ENCODE measurements at regions of chr15 and their contacts with region 1.

Region 1: DNA sequence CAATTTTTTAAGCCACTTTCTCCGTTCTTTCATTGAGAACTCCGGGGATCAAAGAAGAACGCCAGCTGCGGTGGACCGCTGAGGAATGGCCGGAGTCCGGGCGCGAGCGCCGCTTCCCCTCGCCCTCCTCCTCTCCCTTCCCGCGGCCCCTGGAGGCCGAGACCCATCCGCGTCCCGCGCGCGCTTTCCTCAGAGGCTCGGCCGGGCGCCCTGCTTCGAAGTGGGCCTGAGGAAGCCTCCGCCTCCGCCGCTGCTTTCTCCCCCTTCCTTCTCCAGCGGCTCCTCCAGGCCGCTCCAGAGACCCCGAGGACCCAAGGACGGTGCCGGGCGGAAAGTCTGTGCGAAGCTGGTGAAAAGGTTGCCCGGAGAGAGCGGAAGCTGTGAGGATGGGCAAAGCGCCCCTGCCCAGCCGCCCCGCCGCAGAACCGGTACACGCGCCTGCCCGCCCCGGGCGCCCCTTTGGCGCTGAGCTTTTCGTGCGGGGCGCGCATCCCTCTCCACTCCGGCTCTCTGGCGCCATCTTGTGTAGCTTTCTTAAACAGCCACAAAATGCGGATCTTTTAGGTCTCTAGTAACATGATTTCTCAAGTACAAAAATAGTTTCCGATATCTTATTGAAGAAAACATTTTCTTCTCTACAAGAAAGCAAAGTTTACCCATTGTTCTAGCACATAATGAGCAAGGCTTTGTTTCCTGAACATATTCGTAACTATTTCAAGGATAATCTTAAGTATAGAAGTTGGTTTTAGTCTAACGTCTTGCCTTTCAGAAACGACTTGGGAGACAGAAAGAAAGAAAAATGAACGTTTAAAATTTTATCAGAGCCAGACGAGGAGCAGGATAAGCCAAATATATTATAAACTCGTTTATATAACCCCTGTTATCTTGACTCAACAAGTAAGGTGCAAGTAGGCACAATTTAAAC is 59.2 kb upstream of the FAM174B start:
- DNase-seq: peak; percentile 82
- ATAC-seq: peak; percentile 66
- H3K4me3 Mint-ChIP-seq: peak overlapping the region; percentile 73
- H3K27ac Mint-ChIP-seq: no peak overlapping the region
- H3K4me1 Mint-ChIP-seq: peaks cover 18% of the 10 kb centered on the region
- H3K27me3 Mint-ChIP-seq: peaks cover 45% of the 10 kb centered on the region
- CTCF ChIP-seq: peak; percentile 77

Region 2: GRCh38 chr15:92391640-92392039 is 323.1 kb before region 1 on chr15:
- CTCF ChIA-PET with region 1: interaction called, 44 read pairs
- POLR2A ChIA-PET with region 1: interaction called, 3 read pairs
- DNase-seq: peak; percentile 59
- ATAC-seq: peak; percentile 33
- H3K4me3 Mint-ChIP-seq: peak overlapping the region; percentile 80
- H3K27ac Mint-ChIP-seq: no peak overlapping the region
- H3K4me1 Mint-ChIP-seq: peaks cover 27% of the 10 kb centered on the region
- H3K27me3 Mint-ChIP-seq: peaks cover 67% of the 10 kb centered on the region
- CTCF ChIP-seq: 0 out of 2 replicates have a peak, but pooled peaks have one; percentile 26

Region 3: DNA sequence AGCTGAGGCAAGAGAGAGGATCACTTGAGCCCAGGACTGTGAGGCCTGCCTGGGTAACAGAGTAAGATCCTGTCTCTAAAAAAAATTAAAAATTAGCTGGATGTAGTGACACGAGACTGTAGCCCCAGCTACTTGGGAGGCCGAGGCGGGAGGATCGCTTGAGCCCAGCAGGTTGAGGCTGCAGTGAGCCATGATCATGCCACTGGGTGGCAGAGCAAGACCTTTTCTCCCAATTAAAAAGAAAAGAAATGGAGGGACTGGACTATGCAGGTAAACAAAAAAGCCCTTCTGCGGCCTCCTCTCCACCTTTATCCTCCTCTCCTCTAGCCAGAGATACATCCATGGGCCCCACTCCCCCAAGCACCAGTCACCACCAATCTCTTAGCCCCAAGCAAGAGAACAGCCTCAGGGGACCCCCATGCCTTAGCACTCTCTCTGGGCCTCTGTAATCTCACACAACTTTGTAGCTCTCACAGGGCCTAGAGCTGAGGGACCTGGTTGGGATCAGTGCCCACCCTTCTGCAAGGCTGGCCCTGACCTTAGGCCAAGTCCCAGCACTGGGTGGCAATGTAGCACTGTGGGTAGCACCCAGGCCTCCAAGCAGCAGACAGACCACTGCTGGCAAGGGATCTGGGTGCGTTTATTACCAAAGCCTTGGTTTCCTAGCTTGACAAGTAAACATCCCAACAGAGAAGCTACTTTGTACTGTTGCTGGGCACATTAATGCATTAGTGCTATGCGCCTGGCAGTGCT is 102.6 kb before region 1 on chr15:
- CTCF ChIA-PET with region 1: interaction called, 12 read pairs
- POLR2A ChIA-PET with region 1: interaction called, 3 read pairs
- DNase-seq: no peak
- ATAC-seq: peak; percentile 36
- H3K4me3 Mint-ChIP-seq: no peak overlapping the region
- H3K27ac Mint-ChIP-seq: no peak overlapping the region
- H3K4me1 Mint-ChIP-seq: peaks cover 11% of the 10 kb centered on the region
- H3K27me3 Mint-ChIP-seq: no peaks in the 10 kb centered on the region; the same call in 1 of the 2 replicates
- CTCF ChIP-seq: no peak

Region 4: GRCh38 chr15:92693691-92694331 is 20.9 kb before region 1 on chr15:
- CTCF ChIA-PET with region 1: interaction called, 18 read pairs
- POLR2A ChIA-PET with region 1: no interaction called
- DNase-seq: peak; percentile 71
- ATAC-seq: peak; percentile 100
- H3K4me3 Mint-ChIP-seq: no peak overlapping the region
- H3K27ac Mint-ChIP-seq: no peak overlapping the region
- H3K4me1 Mint-ChIP-seq: peaks cover 2% of the 10 kb centered on the region; the same call in 1 of the 2 replicates
- H3K27me3 Mint-ChIP-seq: peaks cover 10% of the 10 kb centered on the region; the same call in 1 of the 2 replicates
- CTCF ChIP-seq: no peak

Region 5: DNA sequence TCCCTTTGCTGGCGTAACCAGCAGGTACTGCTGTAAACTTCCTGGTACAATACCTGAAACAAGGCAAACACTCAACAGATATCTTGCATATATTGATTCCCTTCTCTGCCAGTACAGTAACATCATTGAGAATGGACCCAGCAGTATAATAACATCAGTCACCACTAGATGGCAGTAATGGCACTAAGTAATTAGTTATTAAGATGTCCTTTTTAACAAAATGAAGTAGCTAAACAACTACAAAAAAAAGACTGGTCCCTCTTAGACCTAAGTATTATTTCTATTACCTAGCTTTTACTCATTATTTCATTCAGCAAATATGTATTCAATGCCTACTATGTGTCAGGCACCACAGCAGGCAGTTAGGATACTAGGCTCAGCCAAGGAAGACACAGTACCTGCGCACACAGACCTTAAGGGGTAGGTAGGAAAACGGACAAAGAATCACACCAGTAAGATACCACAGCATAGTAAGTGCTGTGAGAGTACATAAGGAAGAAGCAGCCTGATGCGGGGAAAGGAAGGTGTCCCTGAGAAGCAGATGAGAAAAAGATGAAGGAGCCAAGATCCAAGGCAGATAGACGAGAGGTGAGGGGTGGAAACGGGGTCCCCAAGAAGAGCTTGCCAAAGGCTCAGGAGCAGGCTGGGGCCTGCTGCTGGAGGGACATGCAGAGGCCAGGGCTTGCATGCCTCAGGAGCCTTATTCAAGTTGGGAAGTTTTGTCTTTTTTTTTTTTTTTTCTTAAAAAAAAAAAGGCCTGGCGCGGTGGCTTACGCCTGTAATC is 82.6 kb after region 1 on chr15:
- CTCF ChIA-PET with region 1: no interaction called
- POLR2A ChIA-PET with region 1: no interaction called
- DNase-seq: no peak
- ATAC-seq: peak; percentile 82
- H3K4me3 Mint-ChIP-seq: no peak overlapping the region
- H3K27ac Mint-ChIP-seq: peak overlapping the region; percentile 93
- H3K4me1 Mint-ChIP-seq: peaks cover 8% of the 10 kb centered on the region
- H3K27me3 Mint-ChIP-seq: no peaks in the 10 kb centered on the region
- CTCF ChIP-seq: peak; percentile 56